ENCODE measurements at regions of chr18 and their contacts with region 1.

Region 1: DNA sequence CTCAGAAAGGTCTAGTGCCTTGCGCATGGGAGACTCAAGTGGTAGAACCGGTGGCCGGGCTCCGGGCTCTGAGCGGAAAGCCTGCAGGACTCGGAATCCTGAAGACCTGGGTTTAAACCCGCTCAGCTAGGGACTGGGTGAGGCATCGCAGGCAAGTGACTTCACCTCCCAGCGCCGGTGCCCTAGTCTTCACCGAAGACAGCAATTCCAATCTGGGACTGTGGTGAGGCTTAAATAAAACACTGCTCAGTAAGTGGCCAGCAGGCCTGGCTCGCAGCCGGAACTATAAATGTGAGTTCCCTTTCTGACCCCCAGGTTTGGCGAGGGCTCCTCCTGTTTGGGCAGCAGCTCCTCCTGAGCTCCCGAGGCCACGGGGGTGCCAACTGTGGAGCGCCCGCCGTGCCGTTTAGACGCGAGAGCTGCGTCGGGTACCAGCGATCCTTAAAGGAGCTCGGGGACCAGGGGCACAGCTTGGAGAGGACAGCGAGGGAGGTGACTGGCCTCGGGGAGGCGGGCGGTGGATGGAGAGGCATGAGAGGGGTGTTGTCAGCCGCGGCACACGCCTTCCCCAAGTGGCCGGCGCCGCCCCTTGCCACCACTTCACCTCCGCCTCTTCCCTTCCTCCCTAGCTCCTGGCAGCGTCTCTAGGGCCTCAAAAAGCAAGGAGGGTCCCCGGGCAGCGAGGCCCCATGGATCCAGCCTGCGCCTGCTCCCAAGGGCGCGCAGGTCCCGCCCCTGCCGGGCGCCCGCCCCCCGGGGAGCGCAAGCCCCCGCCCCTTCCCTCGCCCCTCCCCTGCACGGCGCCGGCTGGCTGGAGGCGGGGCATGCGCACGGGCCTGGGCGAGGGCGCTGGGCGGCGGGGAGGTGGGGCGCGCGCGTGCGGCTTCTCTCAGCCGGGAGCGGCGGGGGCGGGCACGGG is 736 bp upstream of the MTCL1 start:
- DNase-seq: peak; percentile 83 to 95
- H3K4me3 ChIP-seq: peak overlapping the region; percentile 86
- H3K4me3 Mint-ChIP-seq: peak overlapping the region; percentile 89
- H3K27ac Mint-ChIP-seq: peak overlapping the region; percentile 26
- H3K4me1 ChIP-seq: peaks cover 17% of the 10 kb centered on the region
- H3K4me1 Mint-ChIP-seq: peaks cover 16% of the 10 kb centered on the region
- H3K27me3 ChIP-seq: no peaks in the 10 kb centered on the region
- H3K27me3 Mint-ChIP-seq: peaks cover 2% of the 10 kb centered on the region
- CTCF ChIP-seq: no peak

Region 2: GRCh38 chr18:8654503-8655451 is 49.8 kb before region 1 on chr18:
- CTCF ChIA-PET with region 1: interaction called, 3 read pairs
- POLR2A ChIA-PET with region 1: no interaction called
- intact Hi-C with region 1: loop called (anchors 5 kb)
- DNase-seq: no peak
- H3K4me3 ChIP-seq: no peak overlapping the region
- H3K4me3 Mint-ChIP-seq: no peak overlapping the region
- H3K27ac Mint-ChIP-seq: no peak overlapping the region
- H3K4me1 ChIP-seq: no peaks in the 10 kb centered on the region
- H3K4me1 Mint-ChIP-seq: peaks cover 7% of the 10 kb centered on the region
- H3K27me3 ChIP-seq: no peaks in the 10 kb centered on the region
- H3K27me3 Mint-ChIP-seq: no peaks in the 10 kb centered on the region
- CTCF ChIP-seq: peak; percentile 48 to 74

Region 3: GRCh38 chr18:8735274-8735673 is 30.7 kb after region 1 on chr18:
- CTCF ChIA-PET with region 1: no interaction called
- POLR2A ChIA-PET with region 1: no interaction called
- intact Hi-C with region 1: no loop called
- DNase-seq: no peak
- H3K4me3 ChIP-seq: no peak overlapping the region
- H3K4me3 Mint-ChIP-seq: no peak overlapping the region
- H3K27ac Mint-ChIP-seq: no peak overlapping the region
- H3K4me1 ChIP-seq: peaks cover 21% of the 10 kb centered on the region
- H3K4me1 Mint-ChIP-seq: peaks cover 9% of the 10 kb centered on the region
- H3K27me3 ChIP-seq: no peaks in the 10 kb centered on the region
- H3K27me3 Mint-ChIP-seq: no peaks in the 10 kb centered on the region
- CTCF ChIP-seq: no peak

Region 4: DNA sequence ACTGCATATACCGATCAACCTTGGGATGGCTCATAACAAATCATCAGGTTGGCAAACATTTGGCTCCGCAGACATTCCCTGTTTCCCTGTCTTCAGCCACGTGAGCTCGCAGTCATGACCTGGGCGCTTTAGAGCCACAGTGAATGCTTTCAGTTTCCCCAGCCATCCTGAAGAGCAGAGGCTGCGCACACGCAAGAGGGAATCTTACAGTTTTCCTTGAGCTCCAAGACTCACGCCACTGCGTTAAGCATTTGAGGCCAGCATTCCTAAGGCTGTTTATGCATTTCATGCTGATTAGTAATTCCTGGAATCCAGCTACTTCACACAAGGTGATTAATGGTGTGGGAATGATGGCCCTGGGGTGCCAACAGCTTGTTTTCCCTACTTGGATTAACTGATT is 95.8 kb after region 1 on chr18:
- CTCF ChIA-PET with region 1: no interaction called
- POLR2A ChIA-PET with region 1: no interaction called
- intact Hi-C with region 1: loop called (anchors 5 kb)
- DNase-seq: peak in 1 of 2 experiments; percentile 16
- H3K4me3 ChIP-seq: no peak overlapping the region
- H3K4me3 Mint-ChIP-seq: no peak overlapping the region
- H3K27ac Mint-ChIP-seq: no peak overlapping the region
- H3K4me1 ChIP-seq: peaks cover 22% of the 10 kb centered on the region
- H3K4me1 Mint-ChIP-seq: peaks cover 2% of the 10 kb centered on the region
- H3K27me3 ChIP-seq: no peaks in the 10 kb centered on the region
- H3K27me3 Mint-ChIP-seq: no peaks in the 10 kb centered on the region
- CTCF ChIP-seq: no peak

Region 5: GRCh38 chr18:8890957-8891464 is 186.4 kb after region 1 on chr18:
- CTCF ChIA-PET with region 1: interaction called, 3 read pairs
- POLR2A ChIA-PET with region 1: no interaction called
- intact Hi-C with region 1: loop called (anchors 10 kb)
- DNase-seq: peak; percentile 75 to 83
- H3K4me3 ChIP-seq: no peak overlapping the region
- H3K4me3 Mint-ChIP-seq: peak overlapping the region; percentile 64
- H3K27ac Mint-ChIP-seq: peak overlapping the region; percentile 93
- H3K4me1 ChIP-seq: peaks cover 21% of the 10 kb centered on the region
- H3K4me1 Mint-ChIP-seq: peaks cover 10% of the 10 kb centered on the region
- H3K27me3 ChIP-seq: no peaks in the 10 kb centered on the region
- H3K27me3 Mint-ChIP-seq: no peaks in the 10 kb centered on the region
- CTCF ChIP-seq: no peak

Region 6: DNA sequence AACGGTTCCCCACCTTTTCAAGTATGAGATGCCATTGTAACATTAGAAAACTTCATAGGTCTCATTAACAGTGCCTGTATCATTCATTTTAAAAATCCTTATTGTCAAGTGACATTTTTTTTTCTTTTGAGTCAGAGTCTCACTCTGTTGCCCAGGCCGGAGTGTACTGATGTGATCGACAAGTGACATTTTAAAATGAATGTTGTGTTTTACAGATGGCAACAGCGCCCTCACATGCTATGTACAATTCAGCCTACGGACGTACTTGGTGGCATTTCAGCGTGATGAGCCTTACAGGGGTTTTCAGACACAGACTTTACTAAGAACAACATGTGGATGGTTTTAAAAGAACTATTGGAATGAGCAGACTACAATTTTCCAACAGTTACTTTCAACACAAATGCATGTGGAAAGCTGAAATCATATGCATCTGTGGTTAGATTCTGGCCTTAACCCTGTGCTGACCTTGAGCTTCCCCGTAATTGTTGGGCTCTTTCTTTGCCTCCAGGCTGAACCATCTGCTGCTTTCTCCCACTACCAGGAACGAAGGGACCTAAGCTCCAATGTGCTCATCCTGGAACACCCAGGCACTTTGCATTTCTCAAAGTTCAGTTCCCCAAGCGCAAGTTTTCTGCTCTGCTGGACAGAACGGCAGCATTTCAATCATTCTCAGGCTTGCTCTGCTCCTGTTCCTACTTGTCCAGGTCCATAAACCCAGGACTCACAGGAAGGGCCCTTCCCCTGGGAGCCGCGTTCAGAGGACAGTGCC is 278.0 kb after region 1 on chr18:
- CTCF ChIA-PET with region 1: interaction called, 12 read pairs
- POLR2A ChIA-PET with region 1: no interaction called
- intact Hi-C with region 1: no loop called
- DNase-seq: peak; percentile 61 to 67
- H3K4me3 ChIP-seq: no peak overlapping the region
- H3K4me3 Mint-ChIP-seq: no peak overlapping the region
- H3K27ac Mint-ChIP-seq: no peak overlapping the region
- H3K4me1 ChIP-seq: peaks cover 18% of the 10 kb centered on the region
- H3K4me1 Mint-ChIP-seq: peaks cover 15% of the 10 kb centered on the region
- H3K27me3 ChIP-seq: no peaks in the 10 kb centered on the region
- H3K27me3 Mint-ChIP-seq: no peaks in the 10 kb centered on the region
- CTCF ChIP-seq: peak; percentile 45 to 59

Region 7: DNA sequence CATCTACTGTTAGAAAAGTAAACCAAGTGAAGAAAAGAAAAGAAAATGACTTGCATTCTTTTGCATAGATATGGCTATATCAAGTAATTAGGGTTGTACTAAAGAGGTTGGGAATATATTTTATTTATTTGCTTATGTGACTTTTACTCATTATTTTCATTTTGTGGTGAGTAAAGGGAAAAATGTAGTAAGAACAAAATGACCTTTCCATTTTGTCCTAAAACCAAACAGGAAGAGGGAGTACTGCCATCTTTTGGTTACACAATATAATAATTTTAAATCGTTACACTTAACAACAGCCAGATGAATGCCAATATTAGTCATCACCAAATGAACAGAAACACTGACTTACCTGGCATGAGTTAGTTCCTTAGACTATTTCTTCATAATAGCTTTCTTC is 350.6 kb after region 1 on chr18:
- CTCF ChIA-PET with region 1: interaction called, 3 read pairs
- POLR2A ChIA-PET with region 1: no interaction called
- intact Hi-C with region 1: loop called (anchors 5 kb)
- DNase-seq: no peak
- H3K4me3 ChIP-seq: no peak overlapping the region
- H3K4me3 Mint-ChIP-seq: no peak overlapping the region
- H3K27ac Mint-ChIP-seq: no peak overlapping the region
- H3K4me1 ChIP-seq: peaks cover 9% of the 10 kb centered on the region
- H3K4me1 Mint-ChIP-seq: peaks cover 11% of the 10 kb centered on the region
- H3K27me3 ChIP-seq: no peaks in the 10 kb centered on the region
- H3K27me3 Mint-ChIP-seq: no peaks in the 10 kb centered on the region
- CTCF ChIP-seq: peak in 1 of 2 experiments; percentile 12

Measured in Caco-2 (cell line).